ENCODE measurements at regions of chr12 and their contacts with region 1.

Region 1: DNA sequence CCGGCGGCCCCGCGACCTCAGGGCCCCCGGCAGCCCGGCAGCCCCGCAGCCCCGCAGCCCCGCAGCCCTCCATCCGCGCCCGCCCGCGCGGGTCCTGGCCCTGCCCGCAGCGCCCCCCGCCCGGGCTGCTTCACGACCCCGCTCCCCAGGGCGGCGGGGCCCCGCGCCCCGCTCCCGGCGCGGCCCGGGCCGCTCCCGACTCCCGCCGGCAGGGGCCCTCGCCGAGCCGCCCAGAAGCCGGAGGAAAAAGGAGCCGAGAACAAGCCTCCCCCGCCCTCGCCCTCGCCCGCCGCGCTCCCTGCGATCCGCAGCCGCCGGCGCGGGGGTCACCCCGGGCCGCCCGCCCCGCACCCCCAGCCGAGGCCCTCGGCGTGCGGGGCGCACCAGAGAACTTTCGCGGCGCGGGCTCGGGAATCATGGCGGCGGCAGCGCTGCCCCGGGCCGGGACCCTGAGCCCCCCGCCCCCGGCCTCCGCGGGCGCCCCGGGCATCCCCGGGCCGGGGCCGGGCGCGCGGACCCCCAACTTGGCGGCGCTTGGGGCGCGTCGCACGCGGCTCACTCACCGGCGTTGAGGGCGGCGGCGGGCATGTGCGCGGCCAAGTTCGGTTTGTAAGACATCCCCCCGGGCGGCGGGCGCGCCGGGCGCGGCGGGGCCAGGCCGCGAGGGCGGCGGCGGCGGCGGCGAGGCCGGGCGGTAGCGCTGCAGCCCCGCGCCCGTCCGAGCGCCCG is 491 bp downstream of the CDK2AP1 start:
- DNase-seq: peak; percentile 60 to 87 (median 72)
- ATAC-seq: peak; percentile 88
- H3K4me3 ChIP-seq: peak overlapping the region; percentile 41
- H3K4me3 Mint-ChIP-seq: no peak overlapping the region
- H3K27ac ChIP-seq: no peak overlapping the region
- H3K27ac Mint-ChIP-seq: no peak overlapping the region
- H3K4me1 ChIP-seq: peaks cover 38% of the 10 kb centered on the region
- H3K4me1 Mint-ChIP-seq: peaks cover 32% of the 10 kb centered on the region
- H3K27me3 ChIP-seq: no peaks in the 10 kb centered on the region
- H3K27me3 Mint-ChIP-seq: no peaks in the 10 kb centered on the region
- CTCF ChIP-seq: peak; percentile 10

Region 2: GRCh38 chr12:123250484-123251383 is 20.4 kb before region 1 on chr12:
- CTCF ChIA-PET with region 1: no interaction called
- POLR2A ChIA-PET with region 1: no interaction called
- intact Hi-C with region 1: no loop called
- DNase-seq: no peak
- ATAC-seq: no peak
- H3K4me3 ChIP-seq: no peak overlapping the region
- H3K4me3 Mint-ChIP-seq: no peak overlapping the region
- H3K27ac ChIP-seq: no peak overlapping the region
- H3K27ac Mint-ChIP-seq: peak overlapping the region; percentile 36
- H3K4me1 ChIP-seq: peaks cover 33% of the 10 kb centered on the region
- H3K4me1 Mint-ChIP-seq: peaks cover 58% of the 10 kb centered on the region
- H3K27me3 ChIP-seq: no peaks in the 10 kb centered on the region
- H3K27me3 Mint-ChIP-seq: no peaks in the 10 kb centered on the region
- CTCF ChIP-seq: no peak

Region 3: DNA sequence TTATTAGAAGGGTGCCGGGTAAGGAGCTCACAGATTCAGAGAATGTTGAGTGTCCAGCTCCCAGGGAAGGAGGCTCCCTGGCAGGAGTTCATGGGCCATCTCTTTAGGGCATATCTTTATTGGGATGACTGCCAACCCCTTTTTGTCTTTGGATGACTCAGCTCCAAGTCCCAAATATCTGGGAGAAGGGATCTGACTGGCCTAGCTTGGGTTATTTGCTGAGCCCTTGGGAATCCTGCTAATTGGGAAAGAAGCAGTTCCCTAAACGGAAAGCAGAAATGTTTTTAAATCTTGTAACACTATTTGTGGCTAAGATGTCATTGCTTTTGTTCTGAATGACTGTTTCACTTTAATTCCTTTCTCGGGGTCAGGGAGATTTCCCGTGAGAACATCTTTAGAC is 343.4 kb after region 1 on chr12:
- CTCF ChIA-PET with region 1: no interaction called
- POLR2A ChIA-PET with region 1: no interaction called
- intact Hi-C with region 1: loop called in 1 of 2 experiments (anchors 1 kb)
- DNase-seq: no peak
- ATAC-seq: no peak
- H3K4me3 ChIP-seq: no peak overlapping the region
- H3K4me3 Mint-ChIP-seq: no peak overlapping the region
- H3K27ac ChIP-seq: no peak overlapping the region
- H3K27ac Mint-ChIP-seq: no peak overlapping the region
- H3K4me1 ChIP-seq: no peaks in the 10 kb centered on the region
- H3K4me1 Mint-ChIP-seq: peaks cover 4% of the 10 kb centered on the region
- H3K27me3 ChIP-seq: no peaks in the 10 kb centered on the region
- H3K27me3 Mint-ChIP-seq: no peaks in the 10 kb centered on the region
- CTCF ChIP-seq: no peak

Measured in CD4-positive, alpha-beta T cell (primary cell).